AG04449 (cell line): ENCODE measurements at regions of chr6 and their contacts with region 1.

Region 1: GRCh38 chr6:160088069-160088783 is 33.4 kb upstream of the SLC22A1 start:
- DNase-seq: peak; percentile 50
- H3K4me3 ChIP-seq: no peak overlapping the region
- CTCF ChIP-seq: peak; percentile 86

Region 2: DNA sequence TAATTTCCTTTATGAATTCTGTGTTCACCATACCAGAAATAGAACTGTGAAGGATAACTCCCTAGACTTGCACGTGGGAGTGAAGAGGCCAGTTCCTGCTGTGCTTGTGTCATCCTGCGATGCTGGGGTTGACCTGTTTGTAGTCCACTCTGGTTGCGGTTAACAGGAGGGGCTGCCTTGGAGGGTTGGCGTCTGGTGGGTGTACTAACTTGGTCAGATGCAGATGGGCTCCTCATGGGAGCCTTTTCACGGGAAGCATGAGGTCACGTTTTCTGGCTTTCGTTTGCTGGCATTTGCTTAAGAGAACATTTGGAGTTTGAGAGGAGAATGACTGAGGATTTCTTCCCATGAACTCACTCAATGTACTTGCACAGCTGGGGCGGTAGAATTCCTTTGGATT is 78.2 kb before region 1 on chr6:
- CTCF ChIA-PET with region 1: no interaction called
- POLR2A ChIA-PET with region 1: no interaction called
- DNase-seq: peak; percentile 70
- H3K4me3 ChIP-seq: no peak overlapping the region
- CTCF ChIP-seq: no peak

Region 3: GRCh38 chr6:160071800-160072690 is 16.2 kb before region 1 on chr6:
- CTCF ChIA-PET with region 1: interaction called, 56 read pairs
- POLR2A ChIA-PET with region 1: no interaction called
- DNase-seq: no peak
- H3K4me3 ChIP-seq: no peak overlapping the region
- CTCF ChIP-seq: no peak

Region 4: DNA sequence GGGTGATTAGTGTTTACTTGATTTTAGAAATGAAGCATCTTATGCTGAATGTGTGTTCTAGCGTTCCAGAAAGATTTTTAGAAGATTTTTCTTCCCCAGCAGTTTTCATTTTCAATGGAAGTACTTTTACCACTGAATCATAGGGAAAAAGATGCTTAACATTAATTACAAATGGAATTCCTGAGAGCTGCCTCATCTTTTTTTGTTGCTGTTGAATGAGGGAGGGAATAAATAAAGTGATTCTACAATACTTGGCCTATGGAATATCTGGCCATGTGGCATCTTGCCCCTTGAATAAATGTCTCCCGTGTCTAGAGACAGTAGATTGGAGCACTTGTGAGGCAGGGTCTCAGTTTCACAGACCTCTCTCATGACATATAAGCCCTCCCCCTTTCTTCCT is 10.7 kb before region 1 on chr6:
- CTCF ChIA-PET with region 1: interaction called, 56 read pairs
- POLR2A ChIA-PET with region 1: no interaction called
- DNase-seq: peak; percentile 9
- H3K4me3 ChIP-seq: no peak overlapping the region
- CTCF ChIP-seq: no peak

Region 5: DNA sequence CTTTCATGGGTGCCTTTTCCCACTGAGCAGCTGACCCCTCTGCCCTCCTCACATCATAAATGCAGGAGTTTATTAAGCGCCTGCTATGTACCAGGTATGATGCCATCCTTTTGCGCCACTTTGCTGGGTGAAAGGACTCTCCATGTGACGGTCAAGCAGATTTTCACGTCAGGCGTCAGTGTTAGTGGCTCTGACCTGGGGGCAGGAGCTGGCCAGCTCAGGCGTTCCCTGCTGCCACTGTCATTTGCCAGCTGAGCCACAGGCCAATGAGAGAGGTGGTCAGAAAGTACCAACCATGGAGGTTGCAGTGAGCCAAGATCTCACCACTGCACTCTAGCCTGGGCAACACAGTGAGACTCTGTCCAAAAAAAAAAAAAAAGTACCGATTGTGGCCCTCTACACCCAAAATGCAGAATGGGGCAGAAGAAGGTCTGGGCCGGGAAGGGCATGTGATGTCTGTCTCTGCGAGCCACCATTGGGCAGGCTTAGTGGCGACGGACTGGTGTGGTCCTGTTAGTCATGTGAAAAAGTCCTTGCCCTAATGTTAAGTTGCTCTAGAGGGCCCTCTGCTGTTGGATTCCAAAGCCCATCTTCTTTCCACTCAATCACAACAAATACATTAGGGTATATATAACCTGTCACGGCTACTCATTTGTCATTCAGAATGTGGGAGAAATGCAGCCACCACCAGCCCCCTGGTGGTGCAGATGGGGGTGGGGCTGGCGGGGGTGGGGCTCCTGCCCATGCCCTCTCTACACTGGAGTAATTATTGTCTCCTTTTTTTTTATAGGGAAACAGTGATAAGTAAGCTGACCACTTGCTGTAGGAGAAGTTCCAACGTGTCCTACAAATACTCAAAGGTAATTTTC is 15.0 kb after region 1 on chr6:
- CTCF ChIA-PET with region 1: interaction called, 63 read pairs
- POLR2A ChIA-PET with region 1: no interaction called
- DNase-seq: no peak
- H3K4me3 ChIP-seq: no peak overlapping the region
- CTCF ChIP-seq: peak; percentile 36

Region 6: GRCh38 chr6:160121981-160122380 is 33.8 kb after region 1 on chr6:
- CTCF ChIA-PET with region 1: interaction called, 12 read pairs
- POLR2A ChIA-PET with region 1: no interaction called
- DNase-seq: no peak
- H3K4me3 ChIP-seq: no peak overlapping the region
- CTCF ChIP-seq: no peak

Region 7: DNA sequence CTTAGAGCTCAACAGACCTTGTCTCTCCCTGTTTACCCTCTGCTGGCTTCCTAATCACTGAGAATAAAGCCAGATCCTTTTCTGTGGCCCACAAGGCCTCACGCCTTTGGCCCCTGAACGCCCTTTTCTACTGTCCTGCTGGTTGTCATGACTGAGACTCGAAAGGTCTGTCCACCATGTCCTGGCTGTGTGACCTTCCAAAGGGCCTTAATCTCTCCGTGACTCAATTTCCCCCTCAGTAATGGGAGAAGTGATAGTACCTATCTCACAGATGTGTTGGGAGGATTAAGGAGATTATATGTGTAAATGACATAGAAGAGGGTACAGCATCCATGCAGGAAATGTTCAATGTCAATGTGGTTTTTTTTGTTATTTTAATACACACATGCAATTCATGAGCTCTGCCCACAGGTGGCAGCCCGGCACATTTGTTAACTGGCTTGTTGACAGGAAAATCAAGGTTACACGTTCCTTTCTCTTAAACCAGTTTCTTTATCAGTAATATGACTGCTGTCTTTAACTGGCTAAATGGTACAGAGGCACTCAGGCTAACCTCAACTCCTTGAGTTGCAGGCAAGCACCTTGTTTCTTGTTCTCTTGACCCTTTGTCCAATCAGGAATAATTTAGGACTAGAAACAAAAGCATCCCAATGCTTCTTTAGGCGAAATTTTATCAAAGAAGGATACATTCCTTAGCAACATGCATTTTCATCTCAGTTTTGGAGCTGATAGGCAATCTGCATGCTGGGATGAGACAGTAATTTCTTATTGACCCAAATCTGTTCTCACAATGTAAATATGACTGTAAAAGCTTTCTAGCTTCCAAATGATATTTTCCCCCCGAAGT is 50.0 kb after region 1 on chr6:
- CTCF ChIA-PET with region 1: interaction called, 14 read pairs
- POLR2A ChIA-PET with region 1: no interaction called
- DNase-seq: no peak
- H3K4me3 ChIP-seq: no peak overlapping the region
- CTCF ChIP-seq: peak; percentile 52

Region 8: GRCh38 chr6:160162030-160162566 is 73.9 kb after region 1 on chr6:
- CTCF ChIA-PET with region 1: no interaction called
- POLR2A ChIA-PET with region 1: no interaction called
- DNase-seq: no peak
- H3K4me3 ChIP-seq: no peak overlapping the region
- CTCF ChIP-seq: no peak

Region 9: DNA sequence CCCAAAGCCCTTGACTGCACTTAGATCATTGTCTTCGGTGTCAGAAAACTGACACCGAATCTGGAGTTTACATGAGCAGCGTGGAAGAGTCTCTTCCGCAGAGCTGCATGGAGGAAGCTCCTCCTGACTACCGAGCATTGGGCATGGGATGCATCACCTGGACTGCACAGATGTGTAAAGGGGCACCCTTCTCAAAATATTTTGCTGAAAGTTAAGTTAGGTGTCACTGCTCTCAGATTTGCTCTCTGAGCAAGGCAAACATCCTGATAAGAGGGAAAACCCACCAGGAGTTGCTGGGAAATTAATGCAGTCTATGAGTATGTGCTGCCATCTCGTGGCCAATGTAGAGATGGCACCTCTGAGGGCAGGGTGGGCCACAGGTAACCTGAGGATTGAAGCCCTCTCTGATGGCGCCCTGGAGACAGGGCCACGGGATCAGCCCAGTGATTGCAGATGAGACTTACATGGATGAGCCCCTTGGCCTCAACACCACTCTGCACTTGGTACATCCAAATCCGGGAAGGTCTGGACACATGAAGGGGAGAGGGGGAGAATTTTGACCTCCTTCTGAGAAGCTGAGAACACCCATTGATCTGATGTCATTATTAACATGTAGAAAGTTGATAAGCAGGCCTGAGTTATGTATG is 445.9 kb after region 1 on chr6:
- CTCF ChIA-PET with region 1: interaction called, 38 read pairs
- POLR2A ChIA-PET with region 1: no interaction called
- DNase-seq: no peak
- H3K4me3 ChIP-seq: no peak overlapping the region
- CTCF ChIP-seq: peak; percentile 78